PC-3 (cell line): ENCODE measurements at regions of chr20 and their contacts with region 1.

Region 1: DNA sequence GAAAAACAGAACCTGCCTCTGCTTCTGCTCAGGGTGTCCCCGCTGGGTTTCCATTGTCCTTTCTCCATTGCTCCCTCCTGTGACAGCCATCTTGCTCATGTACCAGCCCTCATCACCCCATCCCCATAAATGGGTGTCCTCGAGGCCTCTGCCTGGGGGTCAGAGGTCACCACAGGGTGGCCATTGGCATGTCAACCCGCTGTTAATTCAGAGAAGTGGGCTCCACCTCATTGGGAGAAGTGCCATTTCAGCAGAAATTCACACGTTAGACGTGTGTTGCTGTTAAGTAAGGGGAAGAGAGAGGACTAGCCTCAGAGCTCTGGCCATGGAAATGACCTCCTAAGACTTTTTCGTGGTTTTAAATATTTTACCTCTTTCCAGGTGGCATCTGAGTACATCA is 71.9 kb downstream of the PTPN1 start:
- DNase-seq: no peak
- ATAC-seq: no peak
- H3K4me3 ChIP-seq: no peak overlapping the region
- H3K27ac ChIP-seq: no peak overlapping the region
- H3K4me1 ChIP-seq: no peaks in the 10 kb centered on the region
- H3K27me3 ChIP-seq: no peaks in the 10 kb centered on the region
- CTCF ChIP-seq: no peak

Region 2: DNA sequence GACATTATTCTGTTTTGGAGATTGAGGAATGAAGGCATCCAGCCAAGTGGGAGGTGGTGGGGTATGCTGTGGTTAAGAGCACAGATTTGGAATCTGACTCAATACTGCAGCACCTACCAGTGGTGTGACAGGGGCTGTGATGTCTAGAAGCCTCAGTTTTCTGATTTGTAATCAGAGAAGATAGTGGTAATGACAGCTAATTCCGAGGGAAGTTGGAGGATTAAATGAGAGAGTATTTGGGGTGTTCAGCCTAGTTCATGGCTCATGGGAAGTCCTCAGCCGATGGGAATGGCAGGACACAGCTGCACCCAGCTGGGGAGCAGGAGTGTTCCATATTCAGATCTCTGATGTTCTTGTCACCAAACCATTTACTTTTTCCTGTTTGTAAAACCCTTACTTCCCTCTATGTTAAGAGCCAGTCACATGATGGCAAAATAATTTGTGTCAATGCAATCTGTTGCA is 760.2 kb before region 1 on chr20:
- CTCF ChIA-PET with region 1: no interaction called
- POLR2A ChIA-PET with region 1: no interaction called
- intact Hi-C with region 1: no loop called
- DNase-seq: peak; percentile 37
- ATAC-seq: no peak
- H3K4me3 ChIP-seq: no peak overlapping the region
- H3K27ac ChIP-seq: no peak overlapping the region
- H3K4me1 ChIP-seq: peaks cover 14% of the 10 kb centered on the region; the same call in 1 of the 2 replicates
- H3K27me3 ChIP-seq: no peaks in the 10 kb centered on the region
- CTCF ChIP-seq: peak; percentile 24; the same call in 1 of the 2 replicates

Region 3: GRCh38 chr20:51339721-51340450 is 757.8 kb after region 1 on chr20:
- CTCF ChIA-PET with region 1: no interaction called
- POLR2A ChIA-PET with region 1: interaction called, 11 read pairs
- intact Hi-C with region 1: no loop called
- DNase-seq: no peak
- ATAC-seq: no peak
- H3K4me3 ChIP-seq: no peak overlapping the region
- H3K27ac ChIP-seq: no peak overlapping the region
- H3K4me1 ChIP-seq: peaks cover 26% of the 10 kb centered on the region
- H3K27me3 ChIP-seq: no peaks in the 10 kb centered on the region
- CTCF ChIP-seq: no peak